ENCODE measurements at regions of chr7 and their contacts with region 1.

Region 1: GRCh38 chr7:74173866-74174605 is at the start of gene EIF4H:
- DNase-seq: peak; percentile 98
- H3K4me3 ChIP-seq: peak within 1 kb of the TSS; percentile 70 to 98 (median 83)
- H3K27ac ChIP-seq: peak within 1 kb of the TSS; percentile 86 to 100 (median 95)
- H3K4me1 ChIP-seq: peaks cover 48 to 59% (median 54%) of the 10 kb centered on the region in 4 donors
- H3K27me3 ChIP-seq: no peaks in the 10 kb centered on the region
- CTCF ChIP-seq: no peak
- EP300 ChIP-seq: no peak
- POLR2A ChIP-seq: peak in 1 of 4 donors; percentile 19
- total RNA-seq, gene EIF4H: 71.2 to 235 (median 180) TPM

Region 2: GRCh38 chr7:74083117-74083876 is 90.7 kb before region 1 on chr7 and contains the start of gene LIMK1:
- intact Hi-C with region 1: loop called (anchors 10 kb)
- DNase-seq: peak; percentile 82 to 96
- H3K4me3 ChIP-seq: peak within 1 kb of the TSS; percentile 85 to 92 (median 86)
- H3K27ac ChIP-seq: peak within 1 kb of the TSS; percentile 26 to 84 (median 77)
- H3K4me1 ChIP-seq: peaks cover 18 to 26% (median 23%) of the 10 kb centered on the region in 4 donors
- H3K27me3 ChIP-seq: no peaks in the 10 kb centered on the region
- CTCF ChIP-seq: no peak
- EP300 ChIP-seq: no peak
- POLR2A ChIP-seq: no peak
- total RNA-seq, gene LIMK1: 2.9 to 21.0 (median 10.1) TPM

Measured in stomach (tissue), 19 donors.